ENCODE measurements at regions of chr5 and their contacts with region 1.

Region 1: DNA sequence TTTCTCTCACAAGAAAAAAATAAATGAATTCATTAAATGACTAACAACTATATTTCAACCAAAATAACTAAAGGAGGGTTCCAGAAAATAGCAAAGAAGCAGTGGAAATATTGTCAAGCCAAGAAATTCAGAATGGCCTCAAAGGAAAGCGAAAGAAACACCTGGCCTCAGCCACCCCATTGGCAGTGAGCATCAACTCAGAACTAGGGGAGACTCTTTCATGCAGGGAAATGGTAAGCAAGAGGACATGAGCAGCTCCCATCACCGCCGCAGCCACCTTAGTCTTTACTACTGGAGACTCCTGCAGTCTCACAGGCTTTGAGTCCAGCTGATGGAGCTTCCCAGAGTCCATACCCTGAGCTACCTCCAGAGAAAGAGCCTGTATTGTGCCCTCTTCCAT is 343.9 kb upstream of the GRAMD2B start:
- DNase-seq: no peak
- H3K4me3 ChIP-seq: no peak overlapping the region
- H3K27ac ChIP-seq: no peak overlapping the region
- H3K4me1 ChIP-seq: no peaks in the 10 kb centered on the region
- H3K27me3 ChIP-seq: no peaks in the 10 kb centered on the region
- CTCF ChIP-seq: no peak
- POLR2A ChIP-seq: no peak

Region 2: GRCh38 chr5:125829349-125829748 is 249.9 kb before region 1 on chr5:
- intact Hi-C with region 1: loop called (anchors 10 kb)
- DNase-seq: no peak
- H3K4me3 ChIP-seq: no peak overlapping the region
- H3K27ac ChIP-seq: no peak overlapping the region
- H3K4me1 ChIP-seq: no peaks in the 10 kb centered on the region
- H3K27me3 ChIP-seq: no peaks in the 10 kb centered on the region
- CTCF ChIP-seq: no peak
- POLR2A ChIP-seq: no peak

Region 3: GRCh38 chr5:126020770-126021169 is 58.5 kb before region 1 on chr5:
- intact Hi-C with region 1: loop called (anchors 2 kb)
- DNase-seq: no peak
- H3K4me3 ChIP-seq: no peak overlapping the region
- H3K27ac ChIP-seq: no peak overlapping the region
- H3K4me1 ChIP-seq: peaks cover 7% of the 10 kb centered on the region
- H3K27me3 ChIP-seq: no peaks in the 10 kb centered on the region
- CTCF ChIP-seq: no peak
- POLR2A ChIP-seq: no peak